ENCODE measurements at regions of chr2 and their contacts with region 1.

Region 1: GRCh38 chr2:157302492-157303099 is 23.0 kb downstream of the ERMN start:
- DNase-seq: peak; percentile 82
- H3K4me3 Mint-ChIP-seq: no peak overlapping the region
- H3K27ac Mint-ChIP-seq: no peak overlapping the region
- H3K4me1 Mint-ChIP-seq: peaks cover 13% of the 10 kb centered on the region
- H3K27me3 Mint-ChIP-seq: peaks cover 19% of the 10 kb centered on the region

Region 2: GRCh38 chr2:157327621-157328500 is 25.3 kb after region 1 on chr2:
- intact Hi-C with region 1: loop called (anchors 2 kb)
- DNase-seq: peak; percentile 95
- H3K4me3 Mint-ChIP-seq: peak overlapping the region; percentile 32
- H3K27ac Mint-ChIP-seq: peak overlapping the region; percentile 34
- H3K4me1 Mint-ChIP-seq: peaks cover 37% of the 10 kb centered on the region
- H3K27me3 Mint-ChIP-seq: no peaks in the 10 kb centered on the region

Region 3: DNA sequence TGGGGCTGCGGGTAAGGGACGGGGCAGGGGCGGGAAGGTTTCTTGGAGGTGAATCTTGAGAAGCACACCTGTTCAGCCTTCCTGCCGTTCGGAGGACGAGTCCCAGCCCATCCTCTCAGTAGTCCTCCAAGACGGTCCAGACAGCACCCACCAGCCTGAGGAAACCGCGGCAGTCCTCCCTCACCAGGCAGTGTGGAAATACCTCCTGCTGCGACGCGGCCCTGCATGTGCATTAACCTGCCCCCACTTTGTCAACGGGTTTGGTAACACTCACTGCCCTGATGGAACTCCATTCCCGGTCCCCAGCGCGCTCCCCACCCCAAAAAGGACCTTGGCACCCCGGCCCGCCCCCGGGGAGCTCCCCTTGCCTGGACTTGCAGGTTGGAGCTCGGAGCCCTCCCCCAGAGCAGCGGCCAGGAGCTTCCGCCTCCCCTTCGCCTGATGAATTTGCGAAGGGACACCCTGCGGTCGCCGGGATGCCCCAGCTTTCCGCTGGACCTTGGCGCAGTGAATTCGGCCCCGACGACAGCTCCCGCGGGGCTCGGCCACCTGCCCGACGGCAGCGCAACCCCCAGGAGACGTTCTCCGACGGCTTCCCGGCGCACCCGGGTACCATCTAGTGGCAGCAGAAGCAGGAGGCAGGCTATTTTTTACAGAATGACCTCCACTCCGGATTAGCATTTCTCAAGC is 294.5 kb after region 1 on chr2:
- intact Hi-C with region 1: loop called (anchors 1 kb)
- DNase-seq: peak; percentile 86
- H3K4me3 Mint-ChIP-seq: peak overlapping the region; percentile 73
- H3K27ac Mint-ChIP-seq: no peak overlapping the region
- H3K4me1 Mint-ChIP-seq: peaks cover 7% of the 10 kb centered on the region
- H3K27me3 Mint-ChIP-seq: peaks cover 35% of the 10 kb centered on the region

Region 4: DNA sequence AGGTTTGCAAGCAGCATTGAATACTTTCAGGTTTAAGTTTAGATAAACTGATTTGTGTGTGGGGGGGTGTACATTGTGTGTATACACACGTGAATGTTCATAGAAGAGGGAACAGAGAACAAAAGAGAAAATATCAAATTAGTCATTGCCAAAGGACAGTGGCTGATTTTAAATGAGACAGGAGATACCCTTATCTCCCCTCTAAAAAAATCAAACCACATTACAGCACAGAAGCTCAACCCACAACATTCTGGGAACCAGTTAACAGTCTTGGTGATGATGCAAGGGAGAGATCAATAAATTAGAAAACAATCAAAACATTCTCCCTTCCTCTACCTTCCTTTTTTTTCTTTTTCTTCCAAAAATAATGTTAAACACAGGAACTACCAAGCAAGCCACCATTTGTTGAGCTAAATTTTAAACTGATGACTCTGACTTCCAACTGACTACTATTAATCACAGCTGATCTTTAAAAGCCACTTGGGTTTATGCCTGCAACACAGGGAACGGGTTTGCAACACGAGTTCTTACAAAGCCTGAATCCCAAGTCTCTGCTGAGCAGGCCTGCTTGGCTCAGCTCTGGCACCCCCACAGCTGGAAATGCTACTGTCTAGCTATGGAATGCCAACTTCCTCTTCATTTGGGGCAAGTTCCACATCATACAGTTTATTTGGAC is 445.2 kb after region 1 on chr2:
- intact Hi-C with region 1: loop called (anchors 10 kb)
- DNase-seq: no peak
- H3K4me3 Mint-ChIP-seq: no peak overlapping the region
- H3K27ac Mint-ChIP-seq: peak overlapping the region; percentile 13
- H3K4me1 Mint-ChIP-seq: peaks cover 43% of the 10 kb centered on the region
- H3K27me3 Mint-ChIP-seq: no peaks in the 10 kb centered on the region

Region 5: GRCh38 chr2:158006961-158007719 is 704.5 kb after region 1 on chr2:
- intact Hi-C with region 1: loop called (anchors 1 kb)
- DNase-seq: peak; percentile 63
- H3K4me3 Mint-ChIP-seq: no peak overlapping the region
- H3K27ac Mint-ChIP-seq: no peak overlapping the region
- H3K4me1 Mint-ChIP-seq: peaks cover 18% of the 10 kb centered on the region
- H3K27me3 Mint-ChIP-seq: peaks cover 3% of the 10 kb centered on the region